H1 (cell line): ENCODE measurements at regions of chr1 and their contacts with region 1.

Region 1: DNA sequence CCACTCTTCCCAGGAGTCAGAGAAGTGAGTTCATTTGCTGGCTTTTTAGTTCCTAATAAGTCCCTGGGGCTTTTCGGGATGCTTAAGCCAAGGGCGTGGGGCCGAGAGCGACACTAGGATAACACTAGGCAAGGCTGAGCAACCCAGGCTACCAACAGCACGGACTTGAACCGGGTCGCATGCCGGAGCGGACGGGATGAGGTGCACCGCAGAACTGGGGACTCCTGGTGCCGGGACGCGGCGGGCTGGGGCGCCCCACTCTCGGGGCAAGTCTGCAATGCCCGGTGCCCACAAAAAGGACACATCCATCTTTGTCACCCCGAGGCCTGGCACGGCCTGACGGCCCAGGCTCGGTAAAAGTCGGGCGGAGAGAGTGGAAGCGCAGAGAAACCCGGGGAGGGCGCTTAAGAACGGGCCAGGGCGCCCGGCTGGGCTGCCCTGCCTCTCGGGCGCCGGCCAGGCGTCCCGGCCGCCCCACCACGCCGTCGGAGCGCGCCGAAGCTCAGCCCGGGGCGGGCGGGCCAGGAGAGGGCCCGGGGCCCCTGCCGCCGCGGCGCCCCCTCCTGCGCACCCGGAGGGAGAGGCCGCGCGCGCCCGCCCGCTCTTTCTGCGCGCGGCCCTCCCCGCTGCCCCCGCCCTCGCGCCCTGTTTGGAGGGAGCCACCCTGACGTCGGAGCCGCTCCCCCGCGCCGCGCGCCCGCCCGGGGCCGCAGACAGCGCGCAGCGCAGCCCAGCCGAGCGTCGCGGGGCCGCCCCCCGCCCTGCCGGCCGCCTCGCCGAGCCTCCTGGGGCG is at the start of gene NBL1:
- DNase-seq: peak in 1 of 2 experiments; percentile 75
- H3K4me3 ChIP-seq: peak within 1 kb of the TSS; percentile 58 to 77 (median 66)
- H3K27ac ChIP-seq: no peak within 1 kb of the TSS
- H3K4me1 ChIP-seq: peaks cover 5 to 17% (median 12%) of the 10 kb centered on the region in 4 experiments
- H3K27me3 ChIP-seq: peaks cover 24 to 50% (median 35%) of the 10 kb centered on the region in 4 experiments
- CTCF ChIP-seq: no peak
- EP300 ChIP-seq: no peak
- POLR2A ChIP-seq: no peak
- RAD21 ChIP-seq: no peak
- total RNA-seq, gene NBL1: 9.7 and 10.4 TPM in 2 replicates

Region 2: GRCh38 chr1:19628879-19629278 is 14.9 kb before region 1 on chr1:
- CTCF ChIA-PET with region 1: interaction called, 27 read pairs
- POLR2A ChIA-PET with region 1: interaction called, 7 read pairs
- DNase-seq: no peak
- H3K4me3 ChIP-seq: no peak overlapping the region
- H3K27ac ChIP-seq: no peak overlapping the region
- H3K4me1 ChIP-seq: peaks cover 3 to 9% (median 5%) of the 10 kb centered on the region in 4 experiments; a peak in 5 of 7 replicates
- H3K27me3 ChIP-seq: no peaks in the 10 kb centered on the region
- CTCF ChIP-seq: no peak
- EP300 ChIP-seq: no peak
- POLR2A ChIP-seq: no peak
- RAD21 ChIP-seq: no peak

Region 3: GRCh38 chr1:19688041-19688842 is 44.4 kb after region 1 on chr1:
- CTCF ChIA-PET with region 1: no interaction called
- POLR2A ChIA-PET with region 1: no interaction called
- DNase-seq: no peak
- H3K4me3 ChIP-seq: no peak overlapping the region
- H3K27ac ChIP-seq: no peak overlapping the region
- H3K4me1 ChIP-seq: peaks cover 3 to 13% (median 10%) of the 10 kb centered on the region in 4 experiments
- H3K27me3 ChIP-seq: no peaks in the 10 kb centered on the region
- CTCF ChIP-seq: no peak
- EP300 ChIP-seq: no peak
- POLR2A ChIP-seq: no peak
- RAD21 ChIP-seq: no peak

Region 4: GRCh38 chr1:19840228-19840627 is 196.4 kb after region 1 on chr1:
- CTCF ChIA-PET with region 1: no interaction called
- POLR2A ChIA-PET with region 1: no interaction called
- DNase-seq: no peak
- H3K4me3 ChIP-seq: no peak overlapping the region
- H3K27ac ChIP-seq: no peak overlapping the region
- H3K4me1 ChIP-seq: no peaks in the 10 kb centered on the region
- H3K27me3 ChIP-seq: no peaks in the 10 kb centered on the region
- CTCF ChIP-seq: no peak
- EP300 ChIP-seq: no peak
- POLR2A ChIP-seq: no peak
- RAD21 ChIP-seq: no peak